Activated naive CD4-positive, alpha-beta T cell treated with anti-CD3 and anti-CD28 coated beads for 36 hours (primary cell): ENCODE measurements at regions of chr11 and their contacts with region 1.

Region 1: DNA sequence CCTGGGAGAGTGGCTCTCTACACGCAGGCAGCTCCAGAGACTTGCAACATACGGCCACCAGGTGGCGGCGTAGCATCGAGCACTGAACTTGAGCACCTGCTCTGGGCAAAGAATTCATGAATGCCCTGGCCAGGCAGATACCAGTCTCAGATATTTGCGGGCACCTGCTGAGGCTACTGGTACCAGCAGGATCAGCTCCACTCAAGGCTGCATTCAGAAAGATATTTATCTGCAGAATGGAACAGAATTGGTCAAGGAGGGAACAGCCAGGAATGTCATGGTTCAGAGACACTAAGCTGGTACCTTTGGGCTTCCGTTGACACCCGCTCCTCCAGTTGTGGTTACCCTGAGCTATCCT is 10.8 kb upstream of the CCDC86 start:
- DNase-seq: peak; percentile 90
- H3K4me3 Mint-ChIP-seq: no peak overlapping the region
- H3K27ac Mint-ChIP-seq: no peak overlapping the region
- H3K4me1 Mint-ChIP-seq: no peaks in the 10 kb centered on the region
- H3K27me3 Mint-ChIP-seq: no peaks in the 10 kb centered on the region

Region 2: GRCh38 chr11:59448484-59448883 is 1382.6 kb before region 1 on chr11:
- CTCF ChIA-PET with region 1: no interaction called
- intact Hi-C with region 1: no loop called
- DNase-seq: no peak
- H3K4me3 Mint-ChIP-seq: no peak overlapping the region
- H3K27ac Mint-ChIP-seq: no peak overlapping the region
- H3K4me1 Mint-ChIP-seq: no peaks in the 10 kb centered on the region
- H3K27me3 Mint-ChIP-seq: peaks cover 4% of the 10 kb centered on the region

Region 3: GRCh38 chr11:60363542-60364510 is 467.3 kb before region 1 on chr11:
- CTCF ChIA-PET with region 1: no interaction called
- intact Hi-C with region 1: no loop called
- DNase-seq: peak; percentile 81
- H3K4me3 Mint-ChIP-seq: no peak overlapping the region
- H3K27ac Mint-ChIP-seq: no peak overlapping the region
- H3K4me1 Mint-ChIP-seq: peaks cover 4% of the 10 kb centered on the region
- H3K27me3 Mint-ChIP-seq: peaks cover 27% of the 10 kb centered on the region

Region 4: DNA sequence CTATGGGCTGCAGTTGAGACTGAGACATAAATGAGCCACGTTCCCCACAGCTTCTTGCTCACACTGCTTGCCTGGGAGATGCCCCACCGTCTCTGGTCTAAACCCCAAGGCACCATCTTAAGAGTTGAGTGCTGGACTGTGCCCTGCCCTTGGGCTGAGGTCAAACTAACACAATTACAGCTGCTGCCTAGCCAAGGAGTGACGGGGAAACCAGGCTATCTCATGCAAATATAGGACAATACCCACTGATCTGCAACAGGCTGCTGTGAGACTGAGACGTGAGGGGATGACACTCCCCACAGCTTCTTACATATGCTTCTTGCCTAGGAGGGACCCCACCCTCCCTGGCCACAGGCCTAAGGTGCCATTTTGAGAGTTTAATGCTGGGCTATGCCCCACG is 139.5 kb before region 1 on chr11:
- CTCF ChIA-PET with region 1: no interaction called
- intact Hi-C with region 1: no loop called
- DNase-seq: no peak
- H3K4me3 Mint-ChIP-seq: no peak overlapping the region
- H3K27ac Mint-ChIP-seq: no peak overlapping the region
- H3K4me1 Mint-ChIP-seq: no peaks in the 10 kb centered on the region
- H3K27me3 Mint-ChIP-seq: peaks cover 7% of the 10 kb centered on the region

Region 5: DNA sequence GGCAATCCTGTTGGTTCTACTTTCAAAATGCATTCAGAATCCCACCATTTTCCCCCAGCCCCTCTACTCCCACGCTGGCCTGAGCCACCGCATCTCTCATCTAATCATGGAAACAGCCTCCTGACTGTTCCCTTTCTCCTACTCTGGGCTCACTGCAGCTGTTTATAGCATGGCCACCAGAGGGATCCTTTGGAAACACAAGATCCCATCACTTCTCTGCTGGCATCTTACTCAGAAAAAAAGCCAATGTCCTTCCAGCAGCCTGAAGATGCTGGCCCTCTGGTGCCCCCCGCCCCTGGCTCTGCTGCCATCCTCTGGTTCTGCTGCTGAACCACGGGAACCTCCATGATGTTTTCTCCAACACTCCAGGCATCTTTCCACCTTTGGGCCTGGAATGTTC is 120.6 kb before region 1 on chr11:
- CTCF ChIA-PET with region 1: no interaction called
- intact Hi-C with region 1: no loop called
- DNase-seq: no peak
- H3K4me3 Mint-ChIP-seq: no peak overlapping the region
- H3K27ac Mint-ChIP-seq: no peak overlapping the region
- H3K4me1 Mint-ChIP-seq: no peaks in the 10 kb centered on the region
- H3K27me3 Mint-ChIP-seq: peaks cover 7% of the 10 kb centered on the region

Region 6: GRCh38 chr11:60775420-60775961 is 55.6 kb before region 1 on chr11:
- CTCF ChIA-PET with region 1: interaction called, 20 read pairs
- intact Hi-C with region 1: loop called (anchors 5 kb)
- DNase-seq: peak; percentile 93
- H3K4me3 Mint-ChIP-seq: no peak overlapping the region
- H3K27ac Mint-ChIP-seq: no peak overlapping the region
- H3K4me1 Mint-ChIP-seq: peaks cover 7% of the 10 kb centered on the region
- H3K27me3 Mint-ChIP-seq: no peaks in the 10 kb centered on the region

Region 7: GRCh38 chr11:60871378-60872061 is 40.4 kb after region 1 on chr11:
- CTCF ChIA-PET with region 1: interaction called, 11 read pairs
- intact Hi-C with region 1: no loop called
- DNase-seq: no peak
- H3K4me3 Mint-ChIP-seq: no peak overlapping the region
- H3K27ac Mint-ChIP-seq: no peak overlapping the region
- H3K4me1 Mint-ChIP-seq: peaks cover 3% of the 10 kb centered on the region
- H3K27me3 Mint-ChIP-seq: no peaks in the 10 kb centered on the region

Region 8: GRCh38 chr11:60899046-60899936 is 68.2 kb after region 1 on chr11:
- CTCF ChIA-PET with region 1: interaction called, 30 read pairs
- intact Hi-C with region 1: loop called (anchors 1 kb)
- DNase-seq: peak; percentile 32
- H3K4me3 Mint-ChIP-seq: no peak overlapping the region
- H3K27ac Mint-ChIP-seq: peak overlapping the region; percentile 38
- H3K4me1 Mint-ChIP-seq: peaks cover 12% of the 10 kb centered on the region
- H3K27me3 Mint-ChIP-seq: no peaks in the 10 kb centered on the region

Region 9: GRCh38 chr11:61021661-61022212 is 190.6 kb after region 1 on chr11:
- CTCF ChIA-PET with region 1: no interaction called
- intact Hi-C with region 1: loop called (anchors 5 kb)
- DNase-seq: peak; percentile 97
- H3K4me3 Mint-ChIP-seq: peak overlapping the region; percentile 81
- H3K27ac Mint-ChIP-seq: peak overlapping the region; percentile 100
- H3K4me1 Mint-ChIP-seq: peaks cover 78% of the 10 kb centered on the region
- H3K27me3 Mint-ChIP-seq: no peaks in the 10 kb centered on the region